ENCODE measurements at regions of chr1 and their contacts with region 1.

Region 1: GRCh38 chr1:157090196-157090647 is 9.4 kb downstream of the ETV3L start:
- DNase-seq: peak; percentile 87 to 95 (median 94)
- ATAC-seq: peak; percentile 81 to 90
- H3K4me3 ChIP-seq: no peak overlapping the region
- H3K27ac ChIP-seq: no peak overlapping the region
- H3K4me1 ChIP-seq: no peaks in the 10 kb centered on the region
- H3K27me3 ChIP-seq: no peaks in the 10 kb centered on the region

Region 2: GRCh38 chr1:157156058-157156541 is 65.9 kb after region 1 on chr1:
- intact Hi-C with region 1: loop called (anchors 1 to 2 kb)
- DNase-seq: peak; percentile 79 to 90 (median 89)
- ATAC-seq: peak; percentile 75 to 76
- H3K4me3 ChIP-seq: peak overlapping the region; percentile 1
- H3K27ac ChIP-seq: no peak overlapping the region
- H3K4me1 ChIP-seq: no peaks in the 10 kb centered on the region
- H3K27me3 ChIP-seq: no peaks in the 10 kb centered on the region